HEK293 (cell line): ENCODE measurements at regions of chr5 and their contacts with region 1.

Region 1: DNA sequence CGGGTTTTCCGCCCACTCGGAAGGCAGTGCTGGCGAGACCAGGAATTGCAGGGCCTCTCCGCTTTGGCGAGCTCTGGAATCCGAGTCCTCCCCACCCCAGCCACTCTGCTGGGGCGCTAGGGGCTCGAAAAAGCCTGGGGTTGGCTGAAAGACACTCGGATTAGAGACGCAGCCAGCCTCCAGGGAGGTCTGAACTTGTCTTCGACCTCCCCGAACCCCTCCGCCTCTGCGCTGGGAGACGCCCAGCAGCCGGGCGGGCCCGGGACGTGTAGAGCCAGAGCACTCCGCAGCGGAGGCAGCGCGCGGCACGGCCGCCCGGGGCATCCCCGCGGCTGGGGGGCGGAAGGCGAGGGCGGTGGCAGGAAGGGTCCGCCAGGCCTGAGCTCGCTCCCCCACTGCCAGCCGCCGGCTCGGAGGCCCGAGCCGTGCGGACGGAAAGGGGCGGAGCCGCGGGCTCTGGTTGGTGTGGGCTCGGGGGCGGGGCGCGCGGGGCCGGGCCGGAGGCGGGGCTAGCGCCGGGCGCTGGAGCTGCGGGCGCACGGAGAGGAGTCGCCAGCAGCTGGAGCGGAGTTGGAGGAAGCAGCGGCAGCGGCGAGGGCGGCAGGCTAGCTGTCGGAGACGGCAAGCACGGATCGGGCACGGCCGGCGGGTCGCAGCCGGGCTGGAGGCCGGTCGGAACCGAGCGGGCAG is at the start of gene PIK3R1:
- H3K4me3 ChIP-seq: peak within 1 kb of the TSS; percentile 89
- H3K27ac ChIP-seq: peak within 1 kb of the TSS; percentile 98
- H3K4me1 ChIP-seq: peaks cover 3% of the 10 kb centered on the region; the same call in 1 of the 2 replicates
- CTCF ChIP-seq: peak; percentile 96

Region 2: GRCh38 chr5:68192674-68193060 is 22.7 kb before region 1 on chr5:
- CTCF ChIA-PET with region 1: interaction called, 3 read pairs
- POLR2A ChIA-PET with region 1: interaction called, 10 read pairs
- H3K4me3 ChIP-seq: no peak overlapping the region
- H3K27ac ChIP-seq: no peak overlapping the region
- H3K4me1 ChIP-seq: peaks cover 15% of the 10 kb centered on the region
- CTCF ChIP-seq: no peak

Region 3: GRCh38 chr5:68239487-68239886 is 24.1 kb after region 1 on chr5:
- CTCF ChIA-PET with region 1: interaction called, 3 read pairs
- POLR2A ChIA-PET with region 1: interaction called, 18 read pairs
- H3K4me3 ChIP-seq: no peak overlapping the region
- H3K27ac ChIP-seq: no peak overlapping the region
- H3K4me1 ChIP-seq: peaks cover 25% of the 10 kb centered on the region
- CTCF ChIP-seq: no peak

Region 4: DNA sequence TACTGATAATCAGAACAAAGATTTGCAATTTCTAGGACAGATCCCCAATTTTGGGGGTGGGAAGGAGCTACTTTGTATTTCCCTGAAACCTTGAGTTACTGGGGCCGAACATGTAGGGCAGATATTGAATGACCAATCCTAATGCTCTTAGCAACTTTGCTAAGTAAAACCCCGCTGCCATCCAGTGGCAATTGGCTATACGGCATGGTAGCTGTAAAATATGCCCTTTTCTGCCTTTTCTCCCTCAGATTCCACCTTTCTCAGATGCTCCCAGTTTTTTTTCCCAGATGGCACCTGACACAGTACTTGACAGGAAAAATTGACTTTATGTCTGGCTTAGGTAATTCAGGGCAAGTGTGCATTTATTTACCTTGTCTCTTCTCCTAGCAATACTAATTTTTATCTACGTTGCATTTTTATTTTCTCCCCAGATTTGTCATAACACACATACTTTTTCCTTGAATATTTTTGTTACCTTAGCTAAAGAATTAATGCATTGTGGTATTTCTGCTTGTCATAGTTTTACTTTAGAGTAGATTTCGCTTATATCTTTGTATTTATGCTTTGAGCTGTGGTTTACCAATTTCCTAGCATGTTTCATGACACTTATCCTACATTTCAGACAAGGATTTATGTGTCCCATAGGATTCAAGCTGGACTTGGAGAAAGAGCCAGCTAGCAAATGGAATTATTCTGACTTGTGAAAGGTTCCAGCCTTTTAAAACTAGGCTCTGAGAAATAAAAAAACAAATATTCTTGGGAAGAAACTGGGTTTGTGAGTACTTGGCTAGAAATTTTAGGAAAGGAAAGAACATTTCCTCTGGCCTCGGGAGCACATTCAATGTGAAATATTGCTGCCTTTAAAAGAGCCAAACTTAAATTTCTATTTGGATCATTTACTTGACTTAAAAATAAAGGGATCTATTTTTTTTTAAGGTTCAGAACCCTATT is 37.6 kb after region 1 on chr5:
- CTCF ChIA-PET with region 1: interaction called, 11 read pairs
- POLR2A ChIA-PET with region 1: interaction called, 15 read pairs
- H3K4me3 ChIP-seq: no peak overlapping the region
- H3K27ac ChIP-seq: no peak overlapping the region
- H3K4me1 ChIP-seq: peaks cover 13% of the 10 kb centered on the region
- CTCF ChIP-seq: peak; percentile 87